HCT116 (cell line): ENCODE measurements at regions of chr1 and their contacts with region 1.

Region 1: GRCh38 chr1:13617108-13617507 is 33.5 kb downstream of the PDPN start:
- DNase-seq: no peak
- ATAC-seq: no peak
- H3K4me3 ChIP-seq: no peak overlapping the region
- H3K27ac ChIP-seq: no peak overlapping the region
- H3K4me1 ChIP-seq: no peaks in the 10 kb centered on the region
- H3K27me3 ChIP-seq: no peaks in the 10 kb centered on the region; the same call in 1 of the 2 replicates
- CTCF ChIP-seq: no peak
- POLR2A ChIP-seq: no peak
- RAD21 ChIP-seq: no peak

Region 2: GRCh38 chr1:13478692-13479091 is 138.4 kb before region 1 on chr1:
- CTCF ChIA-PET with region 1: no interaction called
- POLR2A ChIA-PET with region 1: no interaction called
- RAD21 ChIA-PET with region 1: no interaction called
- intact Hi-C with region 1: no loop called
- DNase-seq: no peak
- ATAC-seq: no peak
- H3K4me3 ChIP-seq: no peak overlapping the region
- H3K27ac ChIP-seq: no peak overlapping the region
- H3K4me1 ChIP-seq: no peaks in the 10 kb centered on the region
- H3K27me3 ChIP-seq: no peaks in the 10 kb centered on the region
- CTCF ChIP-seq: no peak
- POLR2A ChIP-seq: no peak
- RAD21 ChIP-seq: no peak

Region 3: DNA sequence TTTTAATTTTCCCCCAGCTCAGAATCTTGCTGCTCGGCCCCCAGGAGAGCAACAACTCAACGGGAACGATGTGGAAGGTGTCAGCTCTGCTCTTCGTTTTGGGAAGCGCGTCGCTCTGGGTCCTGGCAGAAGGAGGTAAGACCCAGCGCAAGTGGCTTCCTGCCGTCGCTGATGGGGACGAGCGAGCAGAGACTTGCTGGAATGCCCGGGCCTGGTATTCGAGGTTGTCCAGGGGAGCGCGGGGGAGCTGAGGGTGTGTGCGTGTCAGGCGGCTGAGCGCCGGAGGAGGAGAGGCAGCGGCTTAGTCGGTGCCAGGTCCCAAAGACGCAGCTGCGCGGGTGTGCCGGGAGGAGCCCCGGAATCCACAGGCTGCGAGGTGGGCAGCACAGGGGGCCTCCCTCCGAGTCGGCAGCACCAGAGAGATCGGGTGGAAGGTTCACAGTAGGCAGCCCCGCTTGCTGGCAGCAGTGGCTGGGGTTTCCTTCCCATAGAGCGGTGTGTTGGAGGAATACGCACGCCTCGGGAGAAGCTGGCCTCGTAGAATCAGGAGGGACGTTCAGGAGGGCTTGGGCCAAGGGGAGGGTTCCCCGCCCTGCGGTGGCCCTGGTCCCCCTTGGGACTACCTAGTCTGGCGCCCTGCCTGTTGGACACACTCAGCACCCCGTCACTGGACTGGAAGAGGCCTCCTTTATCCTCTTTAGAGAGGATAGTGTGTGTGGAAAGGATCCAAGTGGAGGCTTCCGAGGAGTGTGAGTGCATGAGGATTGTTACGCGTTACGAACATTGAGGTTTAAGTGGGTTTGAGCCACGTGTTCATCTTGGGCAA is 32.9 kb before region 1 on chr1:
- CTCF ChIA-PET with region 1: no interaction called
- POLR2A ChIA-PET with region 1: no interaction called
- RAD21 ChIA-PET with region 1: no interaction called
- intact Hi-C with region 1: no loop called
- DNase-seq: no peak
- ATAC-seq: no peak
- H3K4me3 ChIP-seq: no peak overlapping the region
- H3K27ac ChIP-seq: no peak overlapping the region
- H3K4me1 ChIP-seq: no peaks in the 10 kb centered on the region
- H3K27me3 ChIP-seq: 0 out of 2 replicates have a peak, but pooled peaks cover 6% of the 10 kb centered on the region
- CTCF ChIP-seq: no peak
- POLR2A ChIP-seq: no peak
- RAD21 ChIP-seq: no peak

Region 4: GRCh38 chr1:13642306-13643004 is 25.3 kb after region 1 on chr1:
- CTCF ChIA-PET with region 1: no interaction called
- POLR2A ChIA-PET with region 1: no interaction called
- RAD21 ChIA-PET with region 1: no interaction called
- intact Hi-C with region 1: loop called (anchors 2 kb)
- DNase-seq: no peak
- ATAC-seq: no peak
- H3K4me3 ChIP-seq: no peak overlapping the region
- H3K27ac ChIP-seq: no peak overlapping the region
- H3K4me1 ChIP-seq: no peaks in the 10 kb centered on the region
- H3K27me3 ChIP-seq: no peaks in the 10 kb centered on the region
- CTCF ChIP-seq: no peak
- POLR2A ChIP-seq: no peak
- RAD21 ChIP-seq: no peak